Vagina (tissue), 2 donors: ENCODE measurements at regions of chr6 and their contacts with region 1.

Region 1: GRCh38 chr6:4775584-4776494 is at the start of gene CDYL:
- DNase-seq: peak in 1 of 2 donors; percentile 88
- H3K4me3 ChIP-seq: peak within 1 kb of the TSS; percentile 72 to 83
- H3K27ac ChIP-seq: peak within 1 kb of the TSS; percentile 85
- H3K4me1 ChIP-seq: peaks cover 25% of the 10 kb centered on the region
- H3K27me3 ChIP-seq: no peaks in the 10 kb centered on the region
- CTCF ChIP-seq: peak in 1 of 3 experiments; percentile 5
- POLR2A ChIP-seq: peak in 1 of 2 donors; percentile 76
- total RNA-seq, gene CDYL: 31.9 TPM

Region 2: GRCh38 chr6:4664117-4664626 is 111.7 kb before region 1 on chr6:
- intact Hi-C with region 1: loop called (anchors 10 kb)
- DNase-seq: peak; percentile 70 to 98
- H3K4me3 ChIP-seq: no peak overlapping the region
- H3K27ac ChIP-seq: peak overlapping the region; percentile 68
- H3K4me1 ChIP-seq: peaks cover 6% of the 10 kb centered on the region
- H3K27me3 ChIP-seq: no peaks in the 10 kb centered on the region
- CTCF ChIP-seq: no peak
- POLR2A ChIP-seq: no peak